Activated B cell treated with CpG ODN at 0.5 μM for 24 hours (primary cell): ENCODE measurements at regions of chr1 and their contacts with region 1.

Region 1: GRCh38 chr1:230957580-230957989 is 21.1 kb downstream of the TTC13 start:
- DNase-seq: no peak
- ATAC-seq: peak; percentile 78
- H3K4me3 Mint-ChIP-seq: peak overlapping the region; percentile 66
- H3K27ac Mint-ChIP-seq: peak overlapping the region; percentile 77
- H3K4me1 Mint-ChIP-seq: peaks cover 39% of the 10 kb centered on the region
- H3K27me3 Mint-ChIP-seq: no peaks in the 10 kb centered on the region
- CTCF ChIP-seq: no peak

Region 2: GRCh38 chr1:230972855-230973271 is 15.3 kb after region 1 on chr1:
- CTCF ChIA-PET with region 1: interaction called, 3 read pairs
- POLR2A ChIA-PET with region 1: interaction called, 13 read pairs
- intact Hi-C with region 1: no loop called
- DNase-seq: no peak
- ATAC-seq: peak; percentile 83
- H3K4me3 Mint-ChIP-seq: peak overlapping the region; percentile 72
- H3K27ac Mint-ChIP-seq: peak overlapping the region; percentile 95
- H3K4me1 Mint-ChIP-seq: peaks cover 68% of the 10 kb centered on the region
- H3K27me3 Mint-ChIP-seq: no peaks in the 10 kb centered on the region
- CTCF ChIP-seq: no peak